Prostate gland (tissue), 2 donors: ENCODE measurements at regions of chr9 and their contacts with region 1.

Region 1: GRCh38 chr9:15469406-15469805 is 41.4 kb downstream of the PSIP1 start:
- DNase-seq: no peak
- H3K4me3 ChIP-seq: no peak overlapping the region
- H3K27ac ChIP-seq: no peak overlapping the region
- H3K4me1 ChIP-seq: no peaks in the 10 kb centered on the region
- H3K27me3 ChIP-seq: no peaks in the 10 kb centered on the region
- CTCF ChIP-seq: no peak
- POLR2A ChIP-seq: no peak

Region 2: GRCh38 chr9:14372437-14373335 is 1096.7 kb before region 1 on chr9:
- intact Hi-C with region 1: loop called (anchors 10 kb)
- DNase-seq: no peak
- H3K4me3 ChIP-seq: no peak overlapping the region
- H3K27ac ChIP-seq: no peak overlapping the region
- H3K4me1 ChIP-seq: no peaks in the 10 kb centered on the region
- H3K27me3 ChIP-seq: no peaks in the 10 kb centered on the region
- CTCF ChIP-seq: no peak
- POLR2A ChIP-seq: no peak

Region 3: DNA sequence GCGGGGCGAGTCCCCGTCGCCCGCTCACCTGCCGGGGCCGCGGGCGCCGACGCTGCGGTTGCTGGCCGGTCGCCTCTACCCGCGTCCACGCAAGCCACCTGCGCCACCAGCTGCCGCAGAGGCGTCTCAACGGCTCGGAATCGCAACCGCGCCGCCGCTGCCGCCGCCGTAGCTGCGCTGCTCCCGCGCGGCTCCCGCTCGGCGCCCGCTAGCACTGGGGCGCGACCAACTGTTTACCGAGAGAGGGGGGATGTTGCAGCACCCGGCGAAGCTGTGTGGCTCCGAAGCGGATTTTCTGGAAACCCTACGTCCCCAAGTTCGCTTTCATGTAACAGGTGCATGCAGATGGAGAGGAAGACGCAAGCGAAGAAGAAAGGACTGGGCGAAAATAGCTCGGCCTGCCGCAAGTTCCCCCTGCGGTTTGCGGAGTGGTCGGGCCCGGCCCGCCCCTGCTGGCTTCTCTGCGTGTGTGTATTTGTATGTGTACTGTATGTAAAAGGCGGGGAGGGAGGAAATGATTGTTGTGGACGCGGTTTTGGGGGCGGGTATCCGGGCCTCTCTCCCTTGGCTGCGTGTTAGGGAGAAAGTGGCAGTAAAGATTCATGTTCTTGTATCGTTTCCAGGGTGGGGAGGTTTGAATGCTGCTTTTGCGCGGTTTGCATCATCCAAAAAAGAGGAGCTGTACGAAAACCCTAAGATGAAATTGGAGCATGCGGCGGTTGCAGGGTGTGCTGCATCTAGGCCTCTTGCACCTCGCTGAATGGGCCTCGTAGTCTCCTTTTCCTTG is 41.6 kb after region 1 on chr9 and contains the start of gene PSIP1:
- intact Hi-C with region 1: no loop called
- DNase-seq: peak; percentile 43
- H3K4me3 ChIP-seq: peak within 1 kb of the TSS; percentile 94 to 95
- H3K27ac ChIP-seq: peak within 1 kb of the TSS; percentile 79 to 86
- H3K4me1 ChIP-seq: no peaks in the 10 kb centered on the region
- H3K27me3 ChIP-seq: no peaks in the 10 kb centered on the region
- CTCF ChIP-seq: peak in 2 of 4 experiments; percentile 25 to 40
- POLR2A ChIP-seq: peak; percentile 62
- total RNA-seq, gene PSIP1: 65.3 to 69.6 TPM